Activated CD4-positive, alpha-beta T cell treated with anti-CD3 and anti-CD28 coated beads for 36 hours (primary cell): ENCODE measurements at regions of chr14 and their contacts with region 1.

Region 1: DNA sequence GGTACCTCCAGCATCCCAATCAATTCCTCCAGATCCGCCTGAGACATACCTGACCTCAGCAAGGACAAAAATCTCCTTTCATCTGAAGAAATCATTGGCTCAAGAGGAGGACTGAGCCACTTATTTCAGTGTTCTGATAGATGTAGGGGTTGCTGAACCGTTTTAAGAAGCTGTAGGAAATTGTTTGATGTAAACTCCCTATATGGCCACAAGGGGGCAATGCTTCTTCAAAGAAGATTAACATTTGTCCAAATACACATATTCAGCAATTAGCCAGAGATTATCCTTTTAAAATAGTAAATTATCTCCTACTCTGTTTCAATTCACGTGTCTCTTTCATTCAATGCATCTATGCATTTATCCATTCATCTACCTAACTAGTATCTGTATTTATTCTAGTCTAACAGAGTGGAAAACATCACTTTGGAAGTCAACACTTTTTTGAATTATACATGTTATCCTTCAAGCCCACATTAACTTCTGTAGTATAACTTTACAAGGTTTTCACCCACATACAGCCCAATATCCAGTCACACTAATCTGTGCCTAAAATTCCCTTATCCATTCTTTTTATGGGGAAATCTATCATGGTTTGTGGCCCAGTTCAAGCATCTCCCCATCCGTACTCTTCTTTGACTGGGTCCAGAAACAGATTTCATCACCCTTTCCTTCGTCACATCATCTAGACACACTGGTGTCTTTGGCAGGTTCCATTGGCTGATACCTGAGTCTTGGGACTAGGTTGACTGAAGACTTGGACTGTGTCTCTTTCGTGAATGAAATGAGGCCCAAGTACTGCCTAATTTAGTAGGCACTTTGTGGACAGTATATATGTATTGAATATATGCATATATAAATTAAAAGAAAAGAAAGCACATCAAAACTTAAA is 411.0 kb upstream of the OR4E1 start:
- DNase-seq: no peak
- ATAC-seq: peak; percentile 63
- H3K4me3 Mint-ChIP-seq: peak overlapping the region; percentile 65
- H3K27ac Mint-ChIP-seq: peak overlapping the region; percentile 74
- H3K4me1 Mint-ChIP-seq: peaks cover 24% of the 10 kb centered on the region
- H3K27me3 Mint-ChIP-seq: no peaks in the 10 kb centered on the region

Region 2: DNA sequence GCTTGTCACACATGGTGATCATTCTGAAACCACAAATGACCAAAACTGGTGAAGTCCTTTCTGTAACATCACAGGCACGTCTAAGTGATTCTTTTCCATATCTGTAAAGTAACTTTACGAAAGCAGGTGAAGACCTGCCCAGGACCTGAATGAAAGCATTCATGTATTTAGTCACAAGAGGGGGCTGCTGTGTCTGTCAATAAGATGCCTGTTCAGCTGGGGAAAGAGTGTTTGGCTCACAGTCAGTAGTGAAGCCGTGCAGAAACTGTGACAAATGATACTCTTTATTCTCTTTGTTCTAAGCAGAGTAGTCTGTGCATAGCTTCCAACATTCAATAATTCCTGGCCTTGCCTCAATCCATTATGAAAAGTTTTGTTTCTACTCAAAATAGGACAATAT is 37.5 kb before region 1 on chr14:
- CTCF ChIA-PET with region 1: interaction called, 5 read pairs
- POLR2A ChIA-PET with region 1: no interaction called
- intact Hi-C with region 1: loop called (anchors 5 kb)
- DNase-seq: peak; percentile 43
- ATAC-seq: peak; percentile 91
- H3K4me3 Mint-ChIP-seq: peak overlapping the region; percentile 39
- H3K27ac Mint-ChIP-seq: peak overlapping the region; percentile 82
- H3K4me1 Mint-ChIP-seq: peaks cover 39% of the 10 kb centered on the region
- H3K27me3 Mint-ChIP-seq: no peaks in the 10 kb centered on the region